Activated CD4-positive, alpha-beta memory T cell treated with anti-CD3 and anti-CD28 coated beads for 36 hours (primary cell): ENCODE measurements at regions of chr12 and their contacts with region 1.

Region 1: DNA sequence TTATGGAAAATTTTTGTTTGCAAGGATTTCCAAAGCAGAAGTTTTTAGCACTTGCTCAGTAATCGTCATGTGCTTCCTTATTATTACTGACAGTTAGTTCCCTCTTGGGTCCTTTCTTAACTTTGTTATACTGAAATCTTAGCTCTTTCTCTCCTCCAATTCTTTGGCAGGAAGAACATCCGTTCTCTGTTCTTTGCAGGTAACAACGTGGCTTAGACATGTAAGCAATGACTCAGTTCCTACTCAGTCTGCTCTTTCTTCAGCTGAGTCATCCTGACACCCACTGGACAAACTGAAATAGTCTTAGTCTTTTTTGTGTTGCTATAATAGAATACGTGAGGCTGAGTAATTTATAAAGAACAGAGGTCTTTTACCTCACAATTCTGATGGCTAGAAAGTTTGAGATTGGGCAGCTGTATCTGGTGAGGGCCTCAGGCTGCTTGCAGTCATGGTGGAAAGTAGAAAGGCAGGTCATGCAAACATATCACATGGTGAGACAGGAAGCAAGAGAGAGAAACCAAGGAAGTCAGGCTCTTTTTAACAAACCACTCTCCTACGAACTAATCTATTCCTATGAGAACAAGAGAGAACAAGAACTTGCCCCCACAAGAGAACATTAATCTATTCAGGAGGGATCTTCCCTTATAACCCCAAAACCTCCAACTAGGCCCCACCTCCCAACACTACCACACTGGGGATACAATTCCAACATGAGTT is 49.2 kb downstream of the TESPA1 start:
- DNase-seq: peak; percentile 72
- H3K4me3 Mint-ChIP-seq: peak overlapping the region; percentile 53
- H3K27ac Mint-ChIP-seq: peak overlapping the region; percentile 98
- H3K4me1 Mint-ChIP-seq: peaks cover 58% of the 10 kb centered on the region
- H3K27me3 Mint-ChIP-seq: no peaks in the 10 kb centered on the region

Region 2: DNA sequence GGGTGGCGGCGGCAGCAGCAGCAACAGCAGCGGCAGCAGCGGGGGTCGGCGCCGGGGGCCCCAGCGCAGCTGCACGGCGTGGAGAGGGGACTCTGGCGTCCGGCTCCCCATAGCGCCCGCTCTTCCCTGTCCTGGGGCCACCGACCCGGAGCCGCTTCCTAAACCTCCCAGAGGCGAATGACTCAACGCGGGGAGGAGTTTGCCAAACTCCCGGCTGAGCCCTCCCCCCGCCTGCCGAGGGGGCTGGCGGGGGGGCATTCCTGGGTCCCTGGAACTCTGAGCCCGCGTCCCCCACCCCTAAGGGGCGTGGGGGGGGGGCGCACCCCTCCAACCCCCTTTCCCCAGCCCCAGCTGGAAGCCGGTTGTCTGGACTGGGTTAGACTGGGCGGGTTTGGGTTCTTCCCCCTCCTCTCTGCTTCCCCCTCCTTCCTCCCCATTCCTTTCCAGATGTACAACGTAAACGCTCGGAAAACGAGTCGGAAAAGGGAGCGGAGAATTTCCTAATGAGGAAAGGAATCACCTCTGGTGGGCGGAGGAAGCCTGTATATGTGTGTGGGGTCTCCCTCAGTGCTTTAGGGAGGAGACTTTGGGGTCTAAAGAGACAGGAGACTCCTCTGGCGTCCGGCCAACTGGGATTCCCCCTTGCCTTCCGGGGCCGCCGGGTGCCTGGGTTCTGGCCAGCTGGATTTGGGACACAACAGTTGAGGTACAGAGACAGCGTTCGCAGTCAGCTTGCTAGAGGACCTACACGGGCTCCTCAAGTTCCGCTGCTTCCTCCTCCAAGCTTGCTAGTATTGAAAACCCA is 516.1 kb before region 1 on chr12 and contains the start of gene ITGA5:
- CTCF ChIA-PET with region 1: no interaction called
- POLR2A ChIA-PET with region 1: no interaction called
- intact Hi-C with region 1: loop called (anchors 10 kb)
- DNase-seq: peak; percentile 63
- H3K4me3 Mint-ChIP-seq: peak within 1 kb of the TSS; percentile 93
- H3K27ac Mint-ChIP-seq: peak within 1 kb of the TSS; percentile 91
- H3K4me1 Mint-ChIP-seq: peaks cover 45% of the 10 kb centered on the region
- H3K27me3 Mint-ChIP-seq: no peaks in the 10 kb centered on the region
- total RNA-seq, gene ITGA5: 33.8 to 34.9 TPM

Region 3: GRCh38 chr12:54479421-54479820 is 456.0 kb before region 1 on chr12:
- CTCF ChIA-PET with region 1: no interaction called
- POLR2A ChIA-PET with region 1: no interaction called
- intact Hi-C with region 1: no loop called
- DNase-seq: no peak
- H3K4me3 Mint-ChIP-seq: no peak overlapping the region
- H3K27ac Mint-ChIP-seq: no peak overlapping the region
- H3K4me1 Mint-ChIP-seq: no peaks in the 10 kb centered on the region
- H3K27me3 Mint-ChIP-seq: peaks cover 3% of the 10 kb centered on the region

Region 4: DNA sequence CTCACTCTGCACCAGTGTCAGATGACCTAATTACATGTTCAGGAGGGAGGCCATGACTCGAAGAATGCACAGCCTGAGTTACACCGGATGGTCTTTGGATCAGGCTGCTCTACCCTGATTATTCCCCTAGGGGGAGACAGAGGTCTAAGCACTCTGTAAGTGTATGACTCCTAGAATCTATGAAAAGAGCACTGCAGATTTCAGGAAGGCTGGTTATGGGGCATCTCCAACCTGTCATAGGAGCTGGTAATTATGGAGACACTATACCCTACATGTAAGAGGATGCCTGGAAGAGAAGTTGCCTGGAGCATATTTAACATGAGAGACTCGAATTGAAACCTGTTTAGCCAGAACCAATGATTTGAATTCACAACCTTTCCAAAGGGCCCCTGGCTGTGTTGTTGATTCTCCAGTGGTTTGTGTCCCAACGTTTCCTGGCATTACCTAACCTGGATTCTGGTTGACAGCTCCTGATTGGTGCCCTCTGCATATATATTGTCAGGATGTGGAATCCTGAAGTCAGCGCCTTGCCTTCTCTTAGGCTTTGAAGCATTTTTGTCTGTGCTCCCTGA is 81.3 kb before region 1 on chr12 and contains the start of gene MUCL1:
- CTCF ChIA-PET with region 1: interaction called, 9 read pairs
- POLR2A ChIA-PET with region 1: no interaction called
- intact Hi-C with region 1: loop called (anchors 1 kb)
- DNase-seq: peak; percentile 80
- H3K4me3 Mint-ChIP-seq: no peak within 1 kb of the TSS
- H3K27ac Mint-ChIP-seq: no peak within 1 kb of the TSS
- H3K4me1 Mint-ChIP-seq: peaks cover 17% of the 10 kb centered on the region
- H3K27me3 Mint-ChIP-seq: peaks cover 2% of the 10 kb centered on the region
- total RNA-seq, gene MUCL1: not detected

Region 5: DNA sequence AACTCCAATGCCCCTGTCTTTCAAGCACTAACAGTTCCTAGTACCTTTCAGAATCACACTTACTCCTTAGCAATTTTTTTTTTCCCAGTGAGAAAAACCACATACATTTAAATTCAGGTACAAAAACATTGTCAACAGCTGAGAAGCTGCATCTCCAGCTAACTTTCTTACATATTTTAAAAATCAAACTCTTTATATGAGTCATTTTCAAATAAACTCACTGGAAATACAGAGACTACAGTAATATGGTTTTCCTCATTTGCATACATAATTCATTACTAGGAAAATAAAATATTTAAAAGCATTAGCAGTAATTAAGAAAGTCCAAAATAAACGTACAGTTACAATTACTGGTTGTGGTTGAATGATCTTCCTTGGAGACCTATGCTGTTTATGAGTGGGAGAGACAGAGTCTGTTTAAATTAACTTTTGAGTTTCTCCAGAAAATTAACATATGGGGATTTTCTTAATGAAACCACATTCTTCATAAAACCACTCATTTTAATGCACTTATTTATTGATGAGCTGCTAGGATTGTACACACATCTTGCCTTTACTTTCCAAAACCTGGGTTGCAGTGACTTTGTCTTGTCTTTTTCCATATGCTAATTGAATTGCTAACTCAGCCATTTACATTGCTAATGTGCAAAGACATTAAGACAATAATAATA is 71.3 kb before region 1 on chr12:
- CTCF ChIA-PET with region 1: no interaction called
- POLR2A ChIA-PET with region 1: interaction called, 5 read pairs
- intact Hi-C with region 1: loop called (anchors 1 kb)
- DNase-seq: no peak
- H3K4me3 Mint-ChIP-seq: no peak overlapping the region
- H3K27ac Mint-ChIP-seq: no peak overlapping the region
- H3K4me1 Mint-ChIP-seq: peaks cover 27% of the 10 kb centered on the region
- H3K27me3 Mint-ChIP-seq: peaks cover 18% of the 10 kb centered on the region

Region 6: DNA sequence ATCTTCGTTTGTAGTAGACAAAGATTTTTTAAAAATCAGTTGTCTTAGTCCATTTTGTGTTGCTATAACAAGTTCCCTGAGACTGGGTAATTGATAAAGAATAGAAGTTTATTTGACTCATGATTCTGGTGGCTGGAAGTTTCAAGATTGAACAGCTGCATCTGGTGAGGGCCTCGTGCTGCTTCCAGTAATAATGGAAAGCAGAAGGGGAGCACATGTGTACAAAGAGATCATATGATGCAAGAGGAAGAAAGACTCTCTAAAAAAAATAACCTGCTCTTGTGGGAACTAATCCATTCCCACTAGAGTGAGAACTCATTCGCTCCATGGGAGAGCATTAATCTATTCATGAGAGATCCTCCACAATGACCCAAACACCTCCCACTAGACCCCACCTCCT is 56.2 kb before region 1 on chr12:
- CTCF ChIA-PET with region 1: no interaction called
- POLR2A ChIA-PET with region 1: no interaction called
- intact Hi-C with region 1: loop called (anchors 1 kb)
- DNase-seq: peak; percentile 34
- H3K4me3 Mint-ChIP-seq: no peak overlapping the region
- H3K27ac Mint-ChIP-seq: no peak overlapping the region
- H3K4me1 Mint-ChIP-seq: peaks cover 6% of the 10 kb centered on the region
- H3K27me3 Mint-ChIP-seq: peaks cover 6% of the 10 kb centered on the region

Region 7: GRCh38 chr12:54984658-54985376 is 49.4 kb after region 1 on chr12 and contains the start of gene TESPA1:
- CTCF ChIA-PET with region 1: interaction called, 6 read pairs
- POLR2A ChIA-PET with region 1: interaction called, 8 read pairs
- intact Hi-C with region 1: loop called (anchors 1 kb)
- DNase-seq: peak; percentile 93
- H3K4me3 Mint-ChIP-seq: peak within 1 kb of the TSS; percentile 79
- H3K27ac Mint-ChIP-seq: peak within 1 kb of the TSS; percentile 90
- H3K4me1 Mint-ChIP-seq: peaks cover 68% of the 10 kb centered on the region
- H3K27me3 Mint-ChIP-seq: no peaks in the 10 kb centered on the region
- total RNA-seq, gene TESPA1: 73.9 to 74.8 TPM

Region 8: DNA sequence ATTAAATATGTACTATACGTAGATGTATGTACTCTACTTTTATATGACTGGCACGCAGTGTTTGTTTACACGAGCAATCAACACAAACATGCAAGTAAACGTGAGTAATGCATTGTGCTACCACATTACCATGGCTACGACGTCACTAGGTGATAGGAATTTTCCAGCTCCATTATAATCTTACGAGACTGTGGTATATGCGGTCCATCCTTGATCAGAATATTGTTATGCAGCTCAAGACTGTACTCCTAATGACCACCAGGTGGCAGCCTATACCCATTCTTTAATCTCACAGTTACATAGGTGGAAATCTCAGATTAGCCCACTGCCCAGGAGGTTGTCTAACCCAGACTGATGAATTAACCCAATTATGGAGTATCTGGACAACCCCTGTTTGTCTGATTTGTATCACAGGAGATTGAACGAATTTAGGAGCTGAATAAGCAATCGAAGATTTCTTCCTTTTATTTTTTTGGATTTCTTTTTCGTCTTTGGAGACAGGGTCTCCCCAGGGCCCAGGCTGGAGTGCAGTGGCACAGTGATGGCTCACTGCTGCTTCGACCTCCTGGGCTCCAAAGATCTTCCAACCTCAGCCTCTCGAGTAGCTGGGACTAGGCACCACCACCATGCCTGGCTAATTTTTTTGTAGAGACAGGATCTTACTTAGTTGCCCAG is 57.9 kb after region 1 on chr12:
- CTCF ChIA-PET with region 1: interaction called, 13 read pairs
- POLR2A ChIA-PET with region 1: interaction called, 3 read pairs
- intact Hi-C with region 1: no loop called
- DNase-seq: peak; percentile 57
- H3K4me3 Mint-ChIP-seq: no peak overlapping the region
- H3K27ac Mint-ChIP-seq: no peak overlapping the region
- H3K4me1 Mint-ChIP-seq: peaks cover 43% of the 10 kb centered on the region
- H3K27me3 Mint-ChIP-seq: no peaks in the 10 kb centered on the region

Region 9: DNA sequence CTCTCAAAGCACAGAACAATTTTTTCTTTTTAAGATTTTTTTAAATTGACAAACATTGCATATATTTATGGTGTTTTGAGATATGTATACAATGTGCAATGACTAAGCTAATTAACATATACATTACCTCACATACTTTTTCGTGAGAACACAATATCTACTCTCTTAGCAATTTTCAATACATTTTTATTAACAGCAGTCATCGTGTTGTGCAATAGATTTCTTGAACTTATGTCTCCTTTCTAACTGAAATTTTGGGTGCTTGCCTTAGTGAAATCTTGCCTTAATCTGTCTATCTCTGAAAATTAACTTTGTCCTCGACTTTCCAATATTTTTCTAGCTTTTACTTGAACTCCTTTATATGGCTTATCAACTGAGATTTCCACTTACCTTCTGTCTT is 292.2 kb after region 1 on chr12:
- CTCF ChIA-PET with region 1: no interaction called
- POLR2A ChIA-PET with region 1: no interaction called
- intact Hi-C with region 1: no loop called
- DNase-seq: no peak
- H3K4me3 Mint-ChIP-seq: no peak overlapping the region
- H3K27ac Mint-ChIP-seq: no peak overlapping the region
- H3K4me1 Mint-ChIP-seq: no peaks in the 10 kb centered on the region
- H3K27me3 Mint-ChIP-seq: peaks cover 21% of the 10 kb centered on the region

Region 10: GRCh38 chr12:55396326-55396725 is 460.9 kb after region 1 on chr12:
- CTCF ChIA-PET with region 1: no interaction called
- POLR2A ChIA-PET with region 1: no interaction called
- intact Hi-C with region 1: no loop called
- DNase-seq: no peak
- H3K4me3 Mint-ChIP-seq: no peak overlapping the region
- H3K27ac Mint-ChIP-seq: no peak overlapping the region
- H3K4me1 Mint-ChIP-seq: no peaks in the 10 kb centered on the region
- H3K27me3 Mint-ChIP-seq: peaks cover 11% of the 10 kb centered on the region